Mucosa of descending colon (tissue), 3 donors: ENCODE measurements at regions of chr16 and their contacts with region 1.

Region 1: GRCh38 chr16:7031031-7031430 is 301.6 kb upstream of the RBFOX1 start:
- DNase-seq: no peak
- ATAC-seq: no peak
- H3K4me3 ChIP-seq: no peak overlapping the region
- H3K4me1 ChIP-seq: no peaks in the 10 kb centered on the region
- CTCF ChIP-seq: no peak

Region 2: DNA sequence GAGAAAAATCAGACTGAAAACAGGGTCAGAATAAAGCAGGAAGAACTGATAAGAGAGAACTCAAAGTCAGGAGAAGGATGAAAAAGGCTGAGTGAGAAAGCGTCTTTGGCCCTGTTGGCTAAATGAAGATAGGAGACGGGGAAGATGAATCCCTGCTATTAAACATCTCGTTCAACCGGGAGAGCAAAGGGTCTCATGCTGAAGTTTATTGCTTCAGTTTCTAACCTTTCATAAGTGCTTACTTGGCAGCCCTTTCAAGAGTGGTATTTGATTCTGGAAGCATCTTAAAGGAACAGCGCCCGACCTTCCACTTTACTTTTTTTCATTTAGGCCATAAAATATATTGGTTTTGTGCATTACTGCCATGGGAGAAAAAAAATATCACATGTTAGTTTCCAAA is 13.3 kb after region 1 on chr16:
- intact Hi-C with region 1: loop called in 1 of 2 experiments (anchors 2 kb)
- DNase-seq: no peak
- ATAC-seq: no peak
- H3K4me3 ChIP-seq: no peak overlapping the region
- H3K4me1 ChIP-seq: no peaks in the 10 kb centered on the region
- CTCF ChIP-seq: no peak